Breast epithelium (tissue), 4 donors: ENCODE measurements at regions of chr3 and their contacts with region 1.

Region 1: DNA sequence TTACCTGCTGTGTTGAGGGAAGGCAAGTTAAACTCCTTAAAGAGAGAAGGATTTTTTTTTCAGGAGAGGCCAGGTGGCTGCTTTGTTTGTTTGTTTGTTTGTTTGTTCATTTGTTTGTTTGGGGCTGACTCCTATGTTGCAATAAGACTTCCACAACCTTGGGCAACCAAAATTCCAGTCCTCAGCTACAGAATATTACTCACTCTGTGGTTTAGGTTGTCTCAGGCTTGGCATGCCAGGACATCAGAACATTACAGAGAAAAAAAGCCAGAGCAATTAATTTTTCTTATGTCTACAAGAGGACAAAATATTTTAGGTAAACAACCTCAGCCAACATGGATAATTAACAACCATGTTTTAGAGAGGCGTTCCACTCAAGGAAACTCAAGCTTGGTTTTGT is 156.7 kb upstream of the ATP11B start:
- DNase-seq: no peak
- H3K4me3 ChIP-seq: no peak overlapping the region
- H3K27ac ChIP-seq: no peak overlapping the region
- H3K4me1 ChIP-seq: no peaks in the 10 kb centered on the region
- H3K27me3 ChIP-seq: no peaks in the 10 kb centered on the region
- CTCF ChIP-seq: no peak
- POLR2A ChIP-seq: no peak

Region 2: DNA sequence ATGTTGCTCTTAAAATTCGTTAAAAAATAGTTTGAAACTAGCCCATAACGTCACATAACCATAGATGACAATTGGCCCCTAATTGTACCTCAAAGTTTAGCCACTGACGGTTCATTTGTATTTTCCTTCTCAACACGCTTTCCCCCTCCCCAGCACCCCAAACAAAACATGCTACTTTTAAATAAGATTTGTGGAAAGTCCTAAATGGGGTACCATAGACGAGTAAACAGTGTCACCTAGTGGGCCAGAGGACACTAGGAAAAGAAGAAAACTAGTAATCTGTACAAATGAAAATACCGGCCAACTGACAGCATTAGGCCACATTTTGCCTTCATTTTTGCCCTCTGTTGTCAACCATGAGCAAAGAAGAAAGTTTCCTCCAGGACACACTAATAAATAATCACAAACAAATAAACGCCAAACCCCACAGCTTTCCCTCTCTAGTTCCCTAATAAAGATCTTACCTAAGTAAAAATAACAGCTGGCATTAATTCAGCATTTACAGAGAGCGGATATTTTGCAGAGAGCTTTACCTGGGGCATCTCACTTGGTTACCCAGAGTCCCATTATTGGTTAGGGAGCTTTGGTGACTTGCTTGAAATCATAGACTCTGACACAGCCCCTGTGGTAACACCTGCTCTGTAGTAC is 18.4 kb before region 1 on chr3:
- intact Hi-C with region 1: loop called (anchors 1 kb)
- DNase-seq: no peak
- H3K4me3 ChIP-seq: no peak overlapping the region
- H3K27ac ChIP-seq: no peak overlapping the region
- H3K4me1 ChIP-seq: no peaks in the 10 kb centered on the region
- H3K27me3 ChIP-seq: no peaks in the 10 kb centered on the region
- CTCF ChIP-seq: peak in 2 of 3 donors; percentile 35
- POLR2A ChIP-seq: no peak